Activated CD4-positive, alpha-beta T cell treated with anti-CD3 and anti-CD28 coated beads for 36 hours (primary cell): ENCODE measurements at regions of chr12 and their contacts with region 1.

Region 1: DNA sequence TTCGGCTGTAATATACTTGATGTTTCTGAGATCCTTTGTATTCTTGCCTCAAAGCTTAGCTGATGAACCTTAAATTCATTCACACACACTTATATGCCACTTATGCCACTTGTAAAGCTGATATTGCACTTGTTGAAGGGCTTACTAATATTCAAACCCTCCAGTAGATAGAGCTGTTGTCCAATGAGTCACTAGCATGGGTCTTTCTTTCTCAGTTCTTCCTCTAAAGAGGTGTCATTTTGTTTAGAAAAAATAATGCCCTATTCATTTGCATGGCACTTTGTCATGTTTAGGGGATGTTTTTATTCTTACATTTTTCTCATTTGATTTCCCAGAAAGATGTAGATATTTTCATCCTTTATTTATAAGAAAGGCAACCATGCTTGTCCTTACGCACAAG is 56.4 kb downstream of the MON2 start:
- DNase-seq: no peak
- ATAC-seq: peak; percentile 91
- H3K4me3 Mint-ChIP-seq: no peak overlapping the region
- H3K27ac Mint-ChIP-seq: no peak overlapping the region
- H3K4me1 Mint-ChIP-seq: peaks cover 49% of the 10 kb centered on the region
- H3K27me3 Mint-ChIP-seq: no peaks in the 10 kb centered on the region

Region 2: GRCh38 chr12:62466594-62467491 is 56.1 kb before region 1 on chr12 and contains the start of gene MON2:
- CTCF ChIA-PET with region 1: no interaction called
- POLR2A ChIA-PET with region 1: no interaction called
- intact Hi-C with region 1: loop called in 1 of 2 experiments (anchors 2 kb)
- DNase-seq: peak; percentile 92
- ATAC-seq: peak; percentile 97
- H3K4me3 Mint-ChIP-seq: peak within 1 kb of the TSS; percentile 92
- H3K27ac Mint-ChIP-seq: peak within 1 kb of the TSS; percentile 93
- H3K4me1 Mint-ChIP-seq: peaks cover 20% of the 10 kb centered on the region
- H3K27me3 Mint-ChIP-seq: peaks cover 4% of the 10 kb centered on the region
- total RNA-seq, gene MON2: 26.9 to 31.3 TPM